BJ (cell line): ENCODE measurements at regions of chr2 and their contacts with region 1.

Region 1: DNA sequence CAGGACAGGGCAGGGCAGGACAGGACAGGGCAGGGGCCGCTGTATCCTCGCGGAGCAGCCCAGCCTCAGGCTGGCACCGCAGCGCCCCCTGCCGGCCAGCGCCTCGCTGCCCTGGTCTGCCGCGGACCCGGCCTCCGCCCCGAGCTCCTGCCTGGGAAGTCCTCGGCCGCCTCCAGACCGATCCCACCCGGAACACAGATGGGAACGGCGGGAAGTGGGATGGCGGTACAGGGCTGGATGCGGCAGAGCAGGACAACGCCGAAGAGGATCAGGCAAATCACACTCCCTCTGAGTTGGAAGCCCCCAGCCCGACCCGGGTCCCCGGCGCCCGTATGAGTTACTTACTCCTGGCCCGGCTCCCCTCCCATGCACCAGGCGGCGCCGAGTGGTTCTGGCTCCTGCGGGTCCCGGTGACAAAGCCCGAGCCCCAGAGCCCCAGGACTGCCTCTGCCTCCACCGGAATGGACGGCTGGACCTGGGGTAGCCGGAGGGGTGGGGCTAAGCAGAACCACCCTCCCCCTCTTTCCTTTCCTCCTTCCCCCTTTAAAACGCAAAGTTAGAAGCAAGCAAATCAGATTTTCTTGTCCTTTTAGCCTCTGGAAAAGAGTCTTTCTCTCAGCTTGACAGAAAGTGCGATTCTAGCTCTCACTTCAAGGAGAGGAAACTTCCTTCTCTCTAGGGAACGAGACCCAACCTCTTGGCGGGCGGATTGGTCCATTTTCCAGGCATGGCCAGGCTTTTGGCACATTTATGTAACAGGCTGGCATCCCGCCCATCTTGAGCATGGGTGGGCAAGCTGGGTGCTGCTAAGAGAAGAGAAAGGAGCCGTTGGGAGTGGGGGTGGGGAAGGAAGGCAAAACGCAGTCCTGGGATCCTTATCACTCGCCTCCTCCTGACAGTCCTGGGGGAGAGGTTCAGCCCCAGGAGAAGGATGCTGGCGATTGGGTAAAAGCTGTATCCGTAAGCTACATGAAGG is at the start of gene TP53I3:
- DNase-seq: peak; percentile 46
- H3K4me3 ChIP-seq: peak within 1 kb of the TSS; percentile 72
- H3K27me3 ChIP-seq: no peaks in the 10 kb centered on the region
- CTCF ChIP-seq: peak; percentile 54
- polyA plus RNA-seq, gene TP53I3: 37.4 and 45.1 TPM in 2 replicates

Region 2: GRCh38 chr2:23824777-23825212 is 259.9 kb before region 1 on chr2:
- CTCF ChIA-PET with region 1: interaction called, 26 read pairs
- POLR2A ChIA-PET with region 1: no interaction called
- DNase-seq: no peak
- H3K4me3 ChIP-seq: no peak overlapping the region
- H3K27me3 ChIP-seq: no peaks in the 10 kb centered on the region
- CTCF ChIP-seq: peak; percentile 63

Region 3: GRCh38 chr2:24123195-24123921 is 38.7 kb after region 1 on chr2 and contains the starts of genes FAM228B and PFN4:
- CTCF ChIA-PET with region 1: interaction called, 17 read pairs
- POLR2A ChIA-PET with region 1: no interaction called
- DNase-seq: no peak
- H3K4me3 ChIP-seq: peak within 1 kb of the TSS; percentile 82
- H3K27me3 ChIP-seq: no peaks in the 10 kb centered on the region
- CTCF ChIP-seq: no peak
- polyA plus RNA-seq, gene FAM228B: 4.2 and 7.6 TPM in 2 replicates
- polyA plus RNA-seq, gene PFN4: 0.40 and 0.65 TPM in 2 replicates

Region 4: GRCh38 chr2:24382363-24383073 is 297.8 kb after region 1 on chr2:
- CTCF ChIA-PET with region 1: interaction called, 12 read pairs
- POLR2A ChIA-PET with region 1: no interaction called
- DNase-seq: no peak
- H3K4me3 ChIP-seq: no peak overlapping the region
- H3K27me3 ChIP-seq: no peaks in the 10 kb centered on the region
- CTCF ChIP-seq: peak; percentile 83